Sciatic nerve (tissue), 2 donors: ENCODE measurements at regions of chr20 and their contacts with region 1.

Region 1: GRCh38 chr20:2206957-2207769 is 88.6 kb upstream of the TGM3 start:
- DNase-seq: peak; percentile 84
- ATAC-seq: peak; percentile 96

Region 2: GRCh38 chr20:2101865-2102584 is 105.1 kb before region 1 on chr20:
- intact Hi-C with region 1: no loop called
- DNase-seq: peak; percentile 93
- ATAC-seq: peak; percentile 97

Region 3: DNA sequence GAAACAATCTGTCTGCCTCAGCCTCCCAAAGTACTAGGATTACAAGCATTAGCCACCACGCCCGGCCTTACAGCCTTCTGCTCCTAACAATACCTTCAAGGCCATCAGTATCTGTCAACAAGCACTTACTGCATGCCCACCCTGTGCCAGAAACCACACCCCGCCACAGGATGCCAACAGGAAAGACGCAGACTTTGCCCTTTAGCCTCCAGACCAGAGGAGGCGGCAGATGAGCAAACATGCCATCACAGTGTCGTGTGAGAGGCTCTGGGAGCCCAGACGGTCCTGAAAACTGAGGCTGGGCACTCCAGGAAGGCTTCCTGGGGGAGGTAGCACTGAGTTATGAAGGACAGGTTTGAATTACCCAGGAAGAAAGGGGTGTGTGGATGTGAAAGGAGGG is 53.9 kb after region 1 on chr20:
- intact Hi-C with region 1: no loop called
- DNase-seq: no peak
- ATAC-seq: no peak

Region 4: GRCh38 chr20:2451939-2452732 is 245.0 kb after region 1 on chr20:
- intact Hi-C with region 1: loop called (anchors 10 kb)
- DNase-seq: peak; percentile 85
- ATAC-seq: peak; percentile 78